HepG2 (cell line): ENCODE measurements at regions of chr11 and their contacts with region 1.

Region 1: DNA sequence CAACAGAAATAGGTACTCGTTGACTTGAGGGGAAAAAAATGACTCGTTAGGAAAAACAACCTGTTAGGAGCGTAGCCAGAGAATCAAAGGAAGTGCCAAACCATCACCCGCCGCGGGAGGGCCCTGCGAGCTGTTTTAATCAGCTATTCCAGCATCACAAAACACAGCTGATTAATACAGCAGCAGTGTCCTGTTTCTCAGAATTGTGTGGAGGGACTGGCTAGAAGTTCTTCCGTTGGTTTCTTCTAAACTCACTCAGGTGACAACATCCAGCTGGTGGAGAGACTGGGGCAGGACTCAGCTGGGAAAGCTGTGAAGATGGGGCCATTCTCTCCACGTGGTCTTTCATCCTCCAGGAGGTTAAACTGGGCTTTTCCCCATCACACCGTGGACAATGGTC is 28.0 kb downstream of the HSPA8 start:
- DNase-seq: no peak
- ATAC-seq: peak; percentile 46
- H3K4me3 ChIP-seq: no peak overlapping the region
- H3K27ac ChIP-seq: no peak overlapping the region
- H3K4me1 ChIP-seq: no peaks in the 10 kb centered on the region
- H3K27me3 ChIP-seq: no peaks in the 10 kb centered on the region
- CTCF ChIP-seq: no peak
- EP300 ChIP-seq: no peak
- POLR2A ChIP-seq: no peak
- RAD21 ChIP-seq: no peak

Region 2: DNA sequence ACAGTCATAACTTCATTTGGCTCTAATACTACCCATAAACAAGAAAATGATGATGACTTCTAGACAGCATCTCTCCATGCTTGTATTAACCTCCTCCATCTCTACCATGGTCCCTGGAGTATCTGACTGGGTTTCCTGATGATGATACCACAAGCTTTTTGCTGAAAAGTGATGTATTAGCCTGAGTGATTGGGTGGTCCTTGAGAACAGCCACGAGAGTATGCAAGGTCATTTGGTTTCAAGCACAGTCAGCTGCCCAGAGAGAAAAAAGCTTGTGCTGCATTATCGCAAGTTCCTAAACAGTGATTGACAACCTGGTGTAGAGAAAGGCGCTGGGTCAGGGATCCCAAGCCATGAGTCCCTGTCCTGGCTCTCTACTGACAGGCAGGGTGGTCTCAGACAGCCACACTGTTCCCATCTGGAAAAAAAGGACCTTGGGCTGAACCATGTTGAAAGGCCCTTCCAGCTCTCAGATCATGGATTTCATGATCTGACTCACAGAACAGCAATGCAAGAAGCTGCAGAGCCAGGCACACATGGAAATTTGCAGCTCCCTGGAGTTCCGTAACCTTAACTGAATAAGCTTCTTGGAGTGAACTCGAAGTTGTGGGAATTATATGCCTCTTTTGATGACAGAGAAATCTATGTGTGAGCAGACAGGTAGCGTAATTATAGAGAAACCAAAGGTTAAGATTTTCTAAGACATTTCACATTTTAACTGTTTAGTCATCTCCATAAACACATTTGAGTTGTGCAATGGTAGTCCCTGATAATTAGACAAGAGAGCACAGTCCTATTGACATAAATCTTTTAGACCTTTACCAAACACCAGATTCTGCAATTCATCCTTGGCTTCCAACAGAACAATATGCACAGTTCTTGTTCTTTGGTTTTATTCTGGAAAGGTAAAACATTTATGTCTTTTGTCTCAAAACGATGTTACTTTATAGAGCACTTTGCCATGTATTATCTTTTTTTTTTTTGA is 432.5 kb before region 1 on chr11:
- CTCF ChIA-PET with region 1: no interaction called
- POLR2A ChIA-PET with region 1: no interaction called
- in situ Hi-C with region 1: loop called (anchors 25 kb)
- intact Hi-C with region 1: no loop called
- DNase-seq: peak; percentile 40
- ATAC-seq: peak; percentile 66
- H3K4me3 ChIP-seq: no peak overlapping the region
- H3K27ac ChIP-seq: no peak overlapping the region
- H3K4me1 ChIP-seq: peaks cover 17% of the 10 kb centered on the region
- H3K27me3 ChIP-seq: peaks cover 1 to 11% of the 10 kb centered on the region in 2 experiments; a peak in 2 of 5 replicates
- CTCF ChIP-seq: no peak
- EP300 ChIP-seq: no peak
- POLR2A ChIP-seq: no peak
- RAD21 ChIP-seq: no peak

Region 3: GRCh38 chr11:122981388-122982264 is 52.3 kb before region 1 on chr11 and contains the start of gene BSX:
- CTCF ChIA-PET with region 1: no interaction called
- POLR2A ChIA-PET with region 1: no interaction called
- in situ Hi-C with region 1: no loop called
- intact Hi-C with region 1: no loop called
- DNase-seq: peak; percentile 4
- ATAC-seq: peak; percentile 75
- H3K4me3 ChIP-seq: no peak within 1 kb of the TSS
- H3K27ac ChIP-seq: no peak within 1 kb of the TSS
- H3K4me1 ChIP-seq: no peaks in the 10 kb centered on the region
- H3K27me3 ChIP-seq: peaks cover 9 to 74% of the 10 kb centered on the region in 2 experiments
- CTCF ChIP-seq: no peak
- EP300 ChIP-seq: no peak
- POLR2A ChIP-seq: no peak
- RAD21 ChIP-seq: no peak
- total RNA-seq, gene BSX: not detected in 2 replicates

Region 4: DNA sequence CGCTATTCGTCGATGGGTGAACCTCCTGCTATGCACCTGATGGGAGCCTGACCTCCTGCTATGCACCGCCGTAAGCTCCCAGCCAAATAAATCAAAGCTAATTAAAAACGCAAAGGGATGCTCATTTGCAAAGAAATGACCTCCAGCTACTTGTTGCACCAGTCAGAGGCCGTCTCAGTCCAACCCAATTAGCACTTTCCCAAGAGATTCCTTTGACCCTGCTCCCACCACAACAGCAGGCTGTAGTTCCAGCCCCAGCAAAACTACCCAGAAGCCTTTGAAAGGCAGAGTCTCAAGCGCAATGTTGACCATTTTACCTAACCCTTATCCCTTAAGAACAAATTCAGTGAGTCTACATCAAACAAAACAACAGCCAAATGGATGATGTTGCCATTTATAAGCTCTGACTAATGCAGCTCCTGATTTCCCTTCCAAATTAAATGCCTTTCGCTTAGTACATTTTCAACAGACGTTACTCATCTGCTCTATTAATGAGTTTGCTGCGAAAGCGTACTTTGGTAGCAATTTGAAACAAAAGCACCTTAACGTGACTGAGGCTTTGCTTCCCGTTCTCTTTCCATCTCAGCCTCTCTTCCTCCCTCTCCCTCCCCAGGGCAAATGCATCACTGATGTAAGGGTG is 35.0 kb before region 1 on chr11:
- CTCF ChIA-PET with region 1: no interaction called
- POLR2A ChIA-PET with region 1: no interaction called
- in situ Hi-C with region 1: no loop called
- intact Hi-C with region 1: no loop called
- DNase-seq: no peak
- ATAC-seq: no peak
- H3K4me3 ChIP-seq: no peak overlapping the region
- H3K27ac ChIP-seq: no peak overlapping the region
- H3K4me1 ChIP-seq: no peaks in the 10 kb centered on the region
- H3K27me3 ChIP-seq: peaks cover 3 to 5% of the 10 kb centered on the region in 2 experiments; a peak in 1 of 5 replicates
- CTCF ChIP-seq: no peak
- EP300 ChIP-seq: no peak
- POLR2A ChIP-seq: no peak
- RAD21 ChIP-seq: no peak